ENCODE measurements at regions of chr9 and their contacts with region 1.

Region 1: DNA sequence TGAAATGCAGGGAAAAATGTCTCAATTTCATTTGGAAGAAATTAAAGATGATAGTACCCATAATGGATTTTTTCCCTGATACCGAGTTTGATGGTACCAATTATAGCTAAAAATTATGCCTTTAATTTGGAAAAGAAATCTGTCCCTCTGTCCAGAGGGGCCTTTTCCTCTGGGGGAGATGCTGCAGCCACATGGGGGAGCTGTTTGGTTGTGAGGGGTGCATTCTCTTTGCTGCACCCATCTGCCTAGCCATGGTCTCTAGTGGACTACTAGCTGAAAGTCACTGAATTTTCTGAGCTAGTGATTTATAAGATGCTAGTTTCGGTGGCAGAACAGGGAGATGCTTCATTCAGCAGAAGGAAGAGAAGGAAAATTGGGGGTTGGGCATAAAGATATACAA is 9.6 kb downstream of the SEC61B start:
- DNase-seq: peak; percentile 52
- H3K4me3 Mint-ChIP-seq: no peak overlapping the region
- H3K27ac Mint-ChIP-seq: no peak overlapping the region
- H3K4me1 Mint-ChIP-seq: peaks cover 8% of the 10 kb centered on the region
- H3K27me3 Mint-ChIP-seq: no peaks in the 10 kb centered on the region

Region 2: GRCh38 chr9:99266255-99267023 is 34.7 kb after region 1 on chr9:
- CTCF ChIA-PET with region 1: interaction called, 10 read pairs
- DNase-seq: peak; percentile 70
- H3K4me3 Mint-ChIP-seq: no peak overlapping the region
- H3K27ac Mint-ChIP-seq: no peak overlapping the region
- H3K4me1 Mint-ChIP-seq: peaks cover 10% of the 10 kb centered on the region
- H3K27me3 Mint-ChIP-seq: peaks cover 4% of the 10 kb centered on the region

Region 3: DNA sequence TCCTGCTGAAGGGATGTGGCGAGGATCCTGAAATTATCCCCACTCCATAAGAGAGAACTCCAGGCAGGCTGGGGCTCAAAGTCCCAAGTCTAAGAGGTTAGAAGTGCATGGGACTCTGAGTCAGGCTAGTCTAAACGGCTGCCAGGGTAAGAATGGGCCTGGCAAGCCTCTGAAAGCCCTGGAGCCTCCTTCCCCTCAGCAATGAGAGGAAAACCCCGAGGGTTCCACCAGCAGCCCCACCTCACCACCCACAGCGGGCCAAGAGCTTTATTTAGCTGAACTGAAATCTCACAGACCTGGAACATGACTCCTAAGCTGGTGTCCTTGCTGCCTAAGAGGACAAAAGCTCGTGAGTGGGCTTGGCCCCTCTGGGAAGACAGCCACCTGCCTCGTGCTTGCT is 125.9 kb after region 1 on chr9:
- CTCF ChIA-PET with region 1: no interaction called
- DNase-seq: no peak
- H3K4me3 Mint-ChIP-seq: no peak overlapping the region
- H3K27ac Mint-ChIP-seq: no peak overlapping the region
- H3K4me1 Mint-ChIP-seq: no peaks in the 10 kb centered on the region
- H3K27me3 Mint-ChIP-seq: peaks cover 54% of the 10 kb centered on the region

Region 4: GRCh38 chr9:100126423-100126822 is 894.7 kb after region 1 on chr9:
- CTCF ChIA-PET with region 1: no interaction called
- DNase-seq: no peak
- H3K4me3 Mint-ChIP-seq: no peak overlapping the region
- H3K27ac Mint-ChIP-seq: no peak overlapping the region
- H3K4me1 Mint-ChIP-seq: no peaks in the 10 kb centered on the region
- H3K27me3 Mint-ChIP-seq: no peaks in the 10 kb centered on the region

Measured in activated naive CD4-positive, alpha-beta T cell treated with anti-CD3 and anti-CD28 coated beads, Interleukin-2, amount 10 ng/mL, durations not matched to agents 7 days and 5 days (primary cell).